Aorta (tissue), 5 donors: ENCODE measurements at regions of chr2 and their contacts with region 1.

Region 1: DNA sequence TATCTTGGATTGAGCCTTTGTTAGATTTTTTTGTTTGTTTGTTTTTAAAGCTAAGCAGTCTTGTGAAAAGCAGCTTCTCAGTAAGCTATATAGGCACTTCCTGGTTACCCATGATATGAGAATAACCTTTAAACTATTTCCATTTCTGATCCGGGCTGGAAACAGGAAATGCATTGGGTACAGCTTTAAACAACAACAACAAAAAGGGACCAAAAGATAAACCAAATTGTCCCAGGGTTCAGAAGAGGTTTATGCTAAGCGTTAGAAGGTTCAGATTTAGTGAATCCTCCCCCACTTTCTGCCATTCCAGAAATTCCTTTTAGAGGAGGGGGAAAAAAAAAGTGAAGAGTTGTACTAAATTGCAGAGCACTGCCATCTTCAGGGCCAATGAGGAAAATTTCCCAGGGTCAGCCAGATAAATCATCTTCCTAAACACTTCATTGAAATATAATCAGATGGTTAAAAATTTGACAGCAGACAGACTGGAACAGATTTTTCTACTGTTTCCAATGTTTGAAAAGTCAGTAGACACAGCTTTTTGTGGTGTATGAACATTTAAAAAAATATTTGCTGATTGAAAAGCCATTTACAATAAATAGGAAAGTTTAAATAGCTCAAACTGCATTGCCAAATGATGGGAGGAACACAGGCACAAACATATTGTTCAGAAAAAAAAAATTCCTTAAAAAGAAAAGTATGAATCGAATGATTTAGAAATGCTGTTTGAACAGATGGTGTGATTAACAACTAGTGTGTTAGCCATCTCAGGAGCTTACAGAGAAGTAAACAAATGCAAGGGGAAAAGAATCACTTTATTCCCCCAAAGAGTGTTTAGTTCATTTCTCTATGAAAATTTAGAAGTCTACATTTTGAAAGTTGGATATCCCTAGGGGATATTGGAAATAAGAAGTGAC is 189.9 kb upstream of the TANK start:
- DNase-seq: no peak
- ATAC-seq: peak; percentile 89
- H3K4me3 ChIP-seq: peak overlapping the region in 1 of 2 donors; percentile 54
- H3K27ac ChIP-seq: no peak overlapping the region
- H3K4me1 ChIP-seq: no peaks in the 10 kb centered on the region
- H3K27me3 ChIP-seq: no peaks in the 10 kb centered on the region

Region 2: GRCh38 chr2:160091381-160091780 is 878.9 kb before region 1 on chr2:
- intact Hi-C with region 1: no loop called
- DNase-seq: no peak
- ATAC-seq: no peak
- H3K4me3 ChIP-seq: no peak overlapping the region
- H3K27ac ChIP-seq: no peak overlapping the region
- H3K4me1 ChIP-seq: no peaks in the 10 kb centered on the region
- H3K27me3 ChIP-seq: no peaks in the 10 kb centered on the region

Region 3: DNA sequence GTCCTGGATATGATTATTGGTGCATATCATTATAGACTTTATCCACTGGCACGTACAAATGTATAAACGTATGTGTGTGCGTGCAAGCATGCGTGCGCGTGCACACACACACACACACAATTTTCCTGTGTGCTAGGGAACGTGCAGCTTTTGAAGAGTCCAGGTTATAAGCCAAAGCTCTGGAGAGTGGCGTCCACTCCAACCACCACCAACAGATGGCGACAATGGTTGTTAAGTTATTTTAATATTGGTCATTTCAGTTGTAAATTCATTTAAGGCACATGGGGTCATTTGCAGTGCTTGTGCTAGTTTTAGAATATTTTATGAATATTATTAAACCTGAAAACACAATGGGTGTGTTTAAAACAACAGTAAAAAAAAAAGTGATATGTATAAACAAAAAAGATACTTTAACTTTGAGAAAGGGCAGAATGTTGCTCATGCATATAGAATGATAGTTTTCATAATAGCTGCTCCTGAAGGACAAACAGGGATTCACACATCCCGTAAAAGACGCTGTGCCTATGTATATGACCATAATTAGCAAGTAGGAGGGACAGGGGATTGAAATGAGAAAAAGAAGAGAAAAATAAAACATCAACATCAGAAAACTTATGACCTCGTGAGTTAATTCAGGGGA is 646.0 kb before region 1 on chr2:
- intact Hi-C with region 1: loop called (anchors 2 to 5 kb)
- DNase-seq: peak; percentile 56 to 81
- ATAC-seq: peak; percentile 68
- H3K4me3 ChIP-seq: no peak overlapping the region
- H3K27ac ChIP-seq: no peak overlapping the region
- H3K4me1 ChIP-seq: peaks cover 7 to 11% of the 10 kb centered on the region in 2 donors
- H3K27me3 ChIP-seq: no peaks in the 10 kb centered on the region

Region 4: GRCh38 chr2:160332318-160332717 is 638.0 kb before region 1 on chr2:
- intact Hi-C with region 1: loop called in 1 of 2 experiments (anchors 5 kb)
- DNase-seq: no peak
- ATAC-seq: peak; percentile 45
- H3K4me3 ChIP-seq: no peak overlapping the region
- H3K27ac ChIP-seq: no peak overlapping the region
- H3K4me1 ChIP-seq: peaks cover 5 to 14% of the 10 kb centered on the region in 2 donors
- H3K27me3 ChIP-seq: no peaks in the 10 kb centered on the region

Region 5: GRCh38 chr2:160429248-160430000 is 540.9 kb before region 1 on chr2:
- intact Hi-C with region 1: loop called in 1 of 2 experiments (anchors 10 kb)
- DNase-seq: no peak
- ATAC-seq: no peak
- H3K4me3 ChIP-seq: no peak overlapping the region
- H3K27ac ChIP-seq: peak overlapping the region in 1 of 2 donors; percentile 44
- H3K4me1 ChIP-seq: peaks cover 3 to 5% of the 10 kb centered on the region in 2 donors
- H3K27me3 ChIP-seq: no peaks in the 10 kb centered on the region